SK-N-SH (cell line): ENCODE measurements at regions of chr1 and their contacts with region 1.

Region 1: GRCh38 chr1:18902523-18903290 is at the start of gene ALDH4A1:
- DNase-seq: peak; percentile 98
- H3K4me3 ChIP-seq: peak within 1 kb of the TSS; percentile 93 to 94
- H3K27ac ChIP-seq: peak within 1 kb of the TSS; percentile 76 to 93
- H3K4me1 ChIP-seq: peaks cover 9 to 16% of the 10 kb centered on the region in 2 experiments; a peak in 2 of 4 replicates
- H3K27me3 ChIP-seq: no peaks in the 10 kb centered on the region
- CTCF ChIP-seq: no peak
- EP300 ChIP-seq: 0 out of 4 replicates have a peak, but pooled peaks of 1 of the 2 experiments have one; percentile 36
- RAD21 ChIP-seq: no peak
- polyA plus RNA-seq, gene ALDH4A1: 18.5 and 26.2 TPM in 2 replicates

Region 2: DNA sequence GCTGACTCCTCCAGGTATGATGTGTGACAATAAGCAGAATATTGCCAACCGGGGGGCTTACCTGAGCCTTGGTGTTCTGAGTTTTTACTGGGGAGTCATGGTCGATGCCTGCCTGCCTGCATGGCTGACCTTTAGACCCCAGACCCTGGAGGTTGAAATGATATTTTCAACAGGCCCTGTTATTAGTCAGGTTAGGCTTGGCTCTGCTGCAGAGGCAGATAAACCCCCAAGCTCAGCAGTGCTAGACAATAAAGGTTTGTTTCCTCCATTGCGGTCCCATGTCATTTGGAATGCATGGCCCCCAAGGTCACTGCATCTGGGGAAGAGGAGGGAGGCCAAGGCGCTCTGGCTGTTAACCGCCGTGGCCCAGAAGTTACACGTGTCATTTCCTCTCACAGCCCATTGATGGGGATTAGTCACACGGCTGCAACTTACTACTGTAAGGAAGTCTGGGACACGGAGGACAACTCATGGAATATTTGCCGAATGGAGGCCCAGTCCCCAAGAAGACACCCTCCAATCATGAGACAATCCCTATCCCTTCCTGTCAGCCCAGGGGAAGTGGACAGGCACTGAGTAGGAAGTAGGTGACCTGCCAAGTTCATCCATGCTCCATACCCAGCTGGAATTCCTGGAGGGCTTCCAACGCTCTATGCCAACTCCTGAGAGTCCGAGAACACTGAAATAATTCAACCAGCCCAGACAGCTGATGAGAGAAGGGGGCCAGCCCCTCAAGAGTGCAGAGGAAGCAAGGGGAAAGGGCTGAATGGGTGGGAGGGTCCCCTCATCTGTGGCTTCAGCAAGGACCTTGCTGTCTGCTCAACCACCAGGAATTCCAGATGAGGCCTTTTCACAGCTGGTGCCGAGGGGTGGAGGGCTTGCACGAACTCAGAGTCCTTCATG is 140.5 kb before region 1 on chr1:
- CTCF ChIA-PET with region 1: no interaction called
- POLR2A ChIA-PET with region 1: no interaction called
- DNase-seq: no peak
- H3K4me3 ChIP-seq: no peak overlapping the region
- H3K27ac ChIP-seq: no peak overlapping the region
- H3K4me1 ChIP-seq: peaks cover 0 to 5% of the 10 kb centered on the region in 2 experiments; a peak in 1 of 4 replicates
- H3K27me3 ChIP-seq: no peaks in the 10 kb centered on the region
- CTCF ChIP-seq: no peak
- EP300 ChIP-seq: no peak
- RAD21 ChIP-seq: no peak

Region 3: GRCh38 chr1:18883636-18884418 is 18.9 kb before region 1 on chr1:
- CTCF ChIA-PET with region 1: interaction called, 134 read pairs
- POLR2A ChIA-PET with region 1: interaction called, 8 read pairs
- DNase-seq: peak; percentile 86
- H3K4me3 ChIP-seq: no peak overlapping the region; a peak in 1 of 4 replicates
- H3K27ac ChIP-seq: no peak overlapping the region
- H3K4me1 ChIP-seq: peaks cover 4 to 8% of the 10 kb centered on the region in 2 experiments; a peak in 2 of 4 replicates
- H3K27me3 ChIP-seq: no peaks in the 10 kb centered on the region
- CTCF ChIP-seq: peak; percentile 84
- EP300 ChIP-seq: no peak
- RAD21 ChIP-seq: peak; percentile 82

Region 4: DNA sequence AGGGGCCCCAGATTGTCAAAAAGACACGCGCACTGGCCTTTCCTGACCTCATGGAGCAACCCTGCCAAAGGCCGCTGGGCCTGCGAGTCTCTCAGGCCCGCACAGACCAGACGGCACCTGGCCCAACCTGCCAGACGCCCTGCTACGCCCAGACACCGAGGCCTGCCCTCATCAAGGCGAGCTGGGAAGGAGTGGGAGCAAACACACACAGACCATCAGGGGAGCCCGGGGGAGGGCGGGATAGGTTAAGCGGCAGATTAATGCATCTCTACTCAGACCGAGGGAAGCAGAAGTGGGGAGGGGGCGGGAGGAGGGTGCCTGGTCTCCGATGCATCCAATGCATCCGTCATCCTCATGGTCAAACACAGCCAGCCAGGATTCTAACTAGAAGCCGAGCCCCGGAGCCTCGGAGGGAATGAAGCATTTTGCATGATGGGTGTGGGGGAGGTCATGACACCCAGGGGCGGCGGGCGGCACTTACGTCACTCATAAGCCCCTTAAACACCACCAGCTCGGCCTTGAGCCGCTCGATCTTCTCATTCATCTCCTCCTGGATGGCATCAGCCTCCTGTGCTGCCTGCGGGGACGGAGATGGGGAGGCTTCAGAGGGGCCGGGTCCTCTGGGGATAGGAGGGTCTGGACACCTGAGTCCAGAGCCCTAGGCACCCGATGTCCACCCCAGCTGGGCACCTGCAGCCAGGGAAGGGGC is 16.6 kb after region 1 on chr1:
- CTCF ChIA-PET with region 1: interaction called, 39 read pairs
- POLR2A ChIA-PET with region 1: interaction called, 4 read pairs
- DNase-seq: no peak
- H3K4me3 ChIP-seq: no peak overlapping the region
- H3K27ac ChIP-seq: no peak overlapping the region
- H3K4me1 ChIP-seq: peaks cover 23 to 32% of the 10 kb centered on the region in 2 experiments; a peak in 3 of 4 replicates
- H3K27me3 ChIP-seq: no peaks in the 10 kb centered on the region
- CTCF ChIP-seq: no peak
- EP300 ChIP-seq: no peak
- RAD21 ChIP-seq: no peak

Region 5: GRCh38 chr1:18941221-18942141 is 38.8 kb after region 1 on chr1:
- CTCF ChIA-PET with region 1: no interaction called
- POLR2A ChIA-PET with region 1: no interaction called
- DNase-seq: no peak
- H3K4me3 ChIP-seq: no peak overlapping the region
- H3K27ac ChIP-seq: peak overlapping the region in 1 of 2 experiments; percentile 83; a peak in 2 of 4 replicates
- H3K4me1 ChIP-seq: peaks cover 20 to 60% of the 10 kb centered on the region in 2 experiments; a peak in 2 of 4 replicates
- H3K27me3 ChIP-seq: no peaks in the 10 kb centered on the region
- CTCF ChIP-seq: no peak
- EP300 ChIP-seq: no peak
- RAD21 ChIP-seq: no peak

Region 6: GRCh38 chr1:18956369-18957135 is 53.8 kb after region 1 on chr1 and contains the start of gene IFFO2:
- CTCF ChIA-PET with region 1: interaction called, 33 read pairs
- POLR2A ChIA-PET with region 1: no interaction called
- DNase-seq: peak; percentile 100
- H3K4me3 ChIP-seq: peak within 1 kb of the TSS; percentile 72 to 77
- H3K27ac ChIP-seq: peak within 1 kb of the TSS in 1 of 2 experiments; percentile 39; a peak in 2 of 4 replicates
- H3K4me1 ChIP-seq: peaks cover 5 to 17% of the 10 kb centered on the region in 2 experiments; a peak in 2 of 4 replicates
- H3K27me3 ChIP-seq: no peaks in the 10 kb centered on the region
- CTCF ChIP-seq: no peak
- EP300 ChIP-seq: no peak
- RAD21 ChIP-seq: no peak
- polyA plus RNA-seq, gene IFFO2: 10.5 TPM in 2 replicates

Region 7: DNA sequence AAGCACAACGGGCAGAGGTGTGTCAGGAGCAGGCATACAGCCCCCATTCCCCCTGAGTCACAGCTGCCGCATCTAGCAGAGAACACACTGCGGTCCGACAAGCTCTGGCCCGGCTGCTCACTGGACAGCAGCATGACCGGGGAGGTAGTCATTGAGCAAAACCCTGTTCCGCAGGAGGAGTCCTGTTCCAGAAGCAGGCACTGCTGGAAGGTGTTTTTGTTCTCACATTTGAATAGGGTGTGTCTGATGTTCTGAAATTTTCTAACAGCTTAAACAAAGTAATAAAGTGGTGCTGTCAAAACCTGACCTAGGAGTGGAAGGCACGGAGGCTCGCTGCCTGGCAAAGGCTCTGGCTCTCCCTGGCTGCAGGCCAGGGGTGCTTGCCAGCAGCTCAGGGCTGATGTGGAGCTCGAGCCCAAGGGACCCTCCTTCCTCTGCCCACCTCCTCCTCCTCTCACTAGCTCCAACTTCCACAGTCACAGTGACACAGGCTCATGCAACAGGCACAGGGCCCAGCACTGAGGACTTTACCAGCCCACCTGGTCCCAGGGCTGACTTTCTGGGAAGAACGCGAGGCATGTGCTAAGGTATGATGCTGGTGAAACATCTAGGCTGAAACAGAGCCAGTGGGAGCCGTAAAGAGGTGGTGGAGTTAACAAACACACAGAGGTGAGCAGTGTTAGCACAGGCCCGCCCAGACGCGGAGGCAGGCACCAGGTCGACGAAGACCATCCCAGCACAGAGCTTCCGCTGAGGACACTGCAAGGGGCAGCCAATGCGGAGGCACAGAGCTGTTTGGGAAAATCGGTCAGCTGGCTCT is 172.4 kb after region 1 on chr1:
- CTCF ChIA-PET with region 1: interaction called, 34 read pairs
- POLR2A ChIA-PET with region 1: interaction called, 3 read pairs
- DNase-seq: no peak
- H3K4me3 ChIP-seq: no peak overlapping the region
- H3K27ac ChIP-seq: no peak overlapping the region; a peak in 1 of 4 replicates
- H3K4me1 ChIP-seq: peaks cover 0 to 5% of the 10 kb centered on the region in 2 experiments; a peak in 1 of 4 replicates
- H3K27me3 ChIP-seq: no peaks in the 10 kb centered on the region
- CTCF ChIP-seq: no peak
- EP300 ChIP-seq: no peak
- RAD21 ChIP-seq: no peak

Region 8: GRCh38 chr1:19113697-19114092 is 211.0 kb after region 1 on chr1:
- CTCF ChIA-PET with region 1: interaction called, 29 read pairs
- POLR2A ChIA-PET with region 1: no interaction called
- DNase-seq: peak; percentile 48
- H3K4me3 ChIP-seq: no peak overlapping the region
- H3K27ac ChIP-seq: no peak overlapping the region
- H3K4me1 ChIP-seq: no peaks in the 10 kb centered on the region
- H3K27me3 ChIP-seq: no peaks in the 10 kb centered on the region
- CTCF ChIP-seq: peak; percentile 67
- EP300 ChIP-seq: no peak
- RAD21 ChIP-seq: peak; percentile 62